ENCODE measurements at regions of chr12 and their contacts with region 1.

Region 1: DNA sequence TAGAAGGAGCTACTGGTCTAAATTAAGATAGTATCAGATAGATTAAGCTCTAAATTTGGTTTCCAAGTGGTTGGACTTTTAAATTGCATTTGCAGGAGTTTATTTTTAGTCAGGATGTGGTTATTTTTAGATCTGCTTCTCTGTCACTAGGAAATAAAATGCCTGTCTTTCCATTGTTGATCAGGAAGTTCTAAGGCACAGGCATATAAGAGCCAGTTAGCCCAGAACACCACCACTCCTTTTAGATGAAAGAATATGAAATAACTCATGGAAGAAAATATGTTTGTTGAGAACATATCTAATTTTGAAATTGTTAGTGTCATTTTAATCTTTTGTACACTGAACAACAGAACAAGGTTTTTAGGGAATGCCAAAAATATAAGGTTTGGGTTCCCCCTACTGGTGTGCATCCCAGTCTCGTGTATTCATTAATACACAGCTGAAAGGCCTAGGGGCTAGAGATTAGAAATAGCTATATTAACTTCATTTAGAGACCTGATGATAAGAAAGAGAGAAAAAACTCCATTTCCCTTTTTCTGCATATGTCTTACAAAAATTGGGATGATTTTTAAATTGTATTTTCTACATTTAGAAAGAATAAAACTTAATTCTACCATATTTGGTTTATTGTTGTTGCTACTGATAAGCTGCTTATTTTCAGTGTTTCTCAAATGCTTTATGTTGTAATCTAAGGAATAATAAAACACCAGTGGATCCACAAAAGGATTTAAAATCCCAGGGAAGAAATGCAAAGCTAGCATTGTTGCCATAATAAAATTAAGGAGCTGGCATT is 67.2 kb downstream of the RIC8B start:
- DNase-seq: peak; percentile 58
- H3K4me3 Mint-ChIP-seq: no peak overlapping the region
- H3K27ac Mint-ChIP-seq: no peak overlapping the region
- H3K4me1 Mint-ChIP-seq: no peaks in the 10 kb centered on the region
- H3K27me3 Mint-ChIP-seq: no peaks in the 10 kb centered on the region
- CTCF ChIP-seq: peak; percentile 57

Region 2: GRCh38 chr12:106378788-106379187 is 462.9 kb before region 1 on chr12:
- CTCF ChIA-PET with region 1: interaction called, 23 read pairs
- POLR2A ChIA-PET with region 1: no interaction called
- intact Hi-C with region 1: no loop called
- DNase-seq: no peak
- H3K4me3 Mint-ChIP-seq: no peak overlapping the region
- H3K27ac Mint-ChIP-seq: no peak overlapping the region
- H3K4me1 Mint-ChIP-seq: no peaks in the 10 kb centered on the region
- H3K27me3 Mint-ChIP-seq: no peaks in the 10 kb centered on the region
- CTCF ChIP-seq: no peak

Region 3: DNA sequence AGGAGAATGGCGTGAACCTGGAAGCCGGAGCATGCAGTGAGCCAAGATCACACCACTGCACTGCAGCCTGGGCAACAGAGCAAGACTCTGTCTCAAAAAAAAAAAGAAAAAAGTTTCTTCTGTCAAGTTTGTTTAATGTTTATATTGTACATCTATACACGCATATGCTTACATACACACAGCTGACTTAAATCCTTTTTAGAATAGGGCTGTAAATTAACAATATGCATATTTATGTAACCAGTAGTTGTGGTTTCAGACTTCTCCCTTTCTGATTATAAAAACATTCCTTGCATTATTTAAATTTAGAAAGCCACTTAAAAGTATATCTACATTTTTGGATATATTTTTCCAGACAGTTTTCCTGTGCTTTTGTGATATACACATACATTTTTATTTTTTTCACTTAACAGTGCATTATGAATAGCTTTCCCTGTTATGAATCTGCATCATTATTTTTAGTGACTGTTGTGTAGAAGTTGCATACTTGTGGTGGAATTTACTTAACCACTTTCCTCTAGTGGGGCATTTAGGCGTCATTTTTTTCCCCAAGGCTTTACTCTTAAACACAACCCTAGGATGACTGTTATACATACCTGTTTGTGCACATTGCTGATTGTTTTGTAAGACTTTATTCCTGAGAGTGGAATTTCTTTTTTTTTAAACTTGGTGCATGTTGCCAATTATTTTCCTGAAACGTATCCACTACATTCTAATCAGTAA is 454.7 kb before region 1 on chr12:
- CTCF ChIA-PET with region 1: interaction called, 32 read pairs
- POLR2A ChIA-PET with region 1: no interaction called
- intact Hi-C with region 1: loop called (anchors 1 kb)
- DNase-seq: no peak
- H3K4me3 Mint-ChIP-seq: no peak overlapping the region
- H3K27ac Mint-ChIP-seq: no peak overlapping the region
- H3K4me1 Mint-ChIP-seq: no peaks in the 10 kb centered on the region
- H3K27me3 Mint-ChIP-seq: no peaks in the 10 kb centered on the region
- CTCF ChIP-seq: no peak

Region 4: DNA sequence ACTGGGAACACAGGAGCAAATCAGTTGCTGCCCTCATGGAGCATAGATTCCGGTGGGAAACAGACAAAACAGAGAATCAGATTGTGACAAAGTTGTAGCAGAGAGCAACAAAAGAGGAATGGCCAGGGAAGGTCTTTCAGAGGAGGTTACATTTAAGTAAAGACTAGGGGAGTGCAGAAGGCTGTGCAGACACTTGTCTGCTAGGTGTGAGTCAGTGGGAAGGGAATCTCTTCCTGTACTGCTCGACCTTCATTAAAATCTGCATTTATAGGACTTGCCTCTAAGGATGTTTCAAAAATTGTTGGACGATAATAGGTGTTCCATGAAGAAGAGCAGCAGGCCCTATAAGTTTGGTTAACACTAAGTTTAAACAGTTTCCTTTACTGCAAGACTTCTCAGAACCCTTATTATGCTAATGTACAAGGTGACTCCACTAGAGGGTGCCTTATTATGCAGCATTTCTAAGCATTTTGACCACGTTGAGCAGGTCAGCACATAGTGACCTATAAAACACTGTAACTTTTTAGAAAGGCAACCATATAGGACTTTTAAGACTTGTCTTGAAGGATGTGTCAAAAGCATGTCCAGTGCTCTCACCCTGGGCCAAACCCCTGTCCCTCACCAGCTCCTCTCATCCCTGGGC is 159.0 kb before region 1 on chr12:
- CTCF ChIA-PET with region 1: interaction called, 3 read pairs
- POLR2A ChIA-PET with region 1: no interaction called
- intact Hi-C with region 1: loop called (anchors 5 kb)
- DNase-seq: peak; percentile 28
- H3K4me3 Mint-ChIP-seq: no peak overlapping the region
- H3K27ac Mint-ChIP-seq: no peak overlapping the region
- H3K4me1 Mint-ChIP-seq: no peaks in the 10 kb centered on the region
- H3K27me3 Mint-ChIP-seq: no peaks in the 10 kb centered on the region
- CTCF ChIP-seq: no peak

Region 5: DNA sequence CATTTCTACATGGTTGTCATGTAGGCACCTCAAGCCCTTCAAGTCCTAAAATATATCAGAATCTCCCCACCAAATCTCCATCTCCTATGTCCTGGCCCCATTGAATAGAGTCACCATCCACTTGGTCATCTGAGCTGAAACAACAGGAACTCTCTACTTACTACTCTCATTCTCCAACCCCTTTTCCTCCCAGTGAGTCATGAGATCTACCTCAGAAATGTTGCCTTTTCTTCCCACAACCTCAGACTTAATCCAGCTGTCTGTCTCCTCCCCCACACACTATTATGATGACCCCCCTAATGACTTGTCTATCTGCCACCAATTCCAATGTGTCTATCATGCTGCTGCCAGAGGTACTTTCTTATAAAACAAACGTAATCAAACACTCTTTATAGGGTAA is 41.7 kb after region 1 on chr12:
- CTCF ChIA-PET with region 1: no interaction called
- POLR2A ChIA-PET with region 1: no interaction called
- intact Hi-C with region 1: no loop called
- DNase-seq: no peak
- H3K4me3 Mint-ChIP-seq: no peak overlapping the region
- H3K27ac Mint-ChIP-seq: no peak overlapping the region
- H3K4me1 Mint-ChIP-seq: peaks cover 5% of the 10 kb centered on the region
- H3K27me3 Mint-ChIP-seq: no peaks in the 10 kb centered on the region
- CTCF ChIP-seq: no peak

Measured in MCF 10A (cell line).